Colonic mucosa (tissue), 4 donors: ENCODE measurements at regions of chr3 and their contacts with region 1.

Region 1: GRCh38 chr3:127825756-127826155 is 3.4 kb upstream of the MGLL start:
- DNase-seq: no peak
- H3K4me3 ChIP-seq: no peak overlapping the region
- H3K27ac ChIP-seq: no peak overlapping the region
- H3K4me1 ChIP-seq: peaks cover 3% of the 10 kb centered on the region
- H3K27me3 ChIP-seq: no peaks in the 10 kb centered on the region
- CTCF ChIP-seq: no peak

Region 2: GRCh38 chr3:127786353-127787070 is 39.2 kb before region 1 on chr3:
- intact Hi-C with region 1: loop called (anchors 5 kb)
- DNase-seq: peak; percentile 94
- H3K4me3 ChIP-seq: no peak overlapping the region
- H3K27ac ChIP-seq: peak overlapping the region; percentile 88
- H3K4me1 ChIP-seq: peaks cover 12% of the 10 kb centered on the region
- H3K27me3 ChIP-seq: no peaks in the 10 kb centered on the region
- CTCF ChIP-seq: no peak

Region 3: DNA sequence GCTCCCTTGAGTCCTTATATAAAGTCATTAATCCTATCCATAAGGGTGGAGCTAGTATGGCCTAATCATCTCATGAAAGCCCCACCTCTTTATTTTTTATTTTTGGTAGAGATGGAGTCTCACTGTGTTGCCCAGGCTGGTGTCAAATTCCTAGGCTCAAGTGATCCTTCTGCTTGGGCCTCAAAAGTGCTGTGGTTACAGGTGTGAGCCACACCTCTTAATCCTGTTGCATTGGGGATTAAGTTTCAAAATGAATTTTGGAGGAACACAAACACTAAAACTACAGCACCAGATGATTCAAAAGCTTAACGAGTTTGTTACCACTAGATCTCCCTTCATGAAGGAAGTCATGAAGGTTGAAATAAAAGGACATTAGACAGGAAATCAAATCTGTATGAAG is 928.0 kb after region 1 on chr3:
- intact Hi-C with region 1: no loop called
- DNase-seq: no peak
- H3K4me3 ChIP-seq: no peak overlapping the region
- H3K27ac ChIP-seq: no peak overlapping the region
- H3K4me1 ChIP-seq: no peaks in the 10 kb centered on the region
- H3K27me3 ChIP-seq: no peaks in the 10 kb centered on the region
- CTCF ChIP-seq: no peak